ENCODE measurements at regions of chr5 and their contacts with region 1.

Region 1: DNA sequence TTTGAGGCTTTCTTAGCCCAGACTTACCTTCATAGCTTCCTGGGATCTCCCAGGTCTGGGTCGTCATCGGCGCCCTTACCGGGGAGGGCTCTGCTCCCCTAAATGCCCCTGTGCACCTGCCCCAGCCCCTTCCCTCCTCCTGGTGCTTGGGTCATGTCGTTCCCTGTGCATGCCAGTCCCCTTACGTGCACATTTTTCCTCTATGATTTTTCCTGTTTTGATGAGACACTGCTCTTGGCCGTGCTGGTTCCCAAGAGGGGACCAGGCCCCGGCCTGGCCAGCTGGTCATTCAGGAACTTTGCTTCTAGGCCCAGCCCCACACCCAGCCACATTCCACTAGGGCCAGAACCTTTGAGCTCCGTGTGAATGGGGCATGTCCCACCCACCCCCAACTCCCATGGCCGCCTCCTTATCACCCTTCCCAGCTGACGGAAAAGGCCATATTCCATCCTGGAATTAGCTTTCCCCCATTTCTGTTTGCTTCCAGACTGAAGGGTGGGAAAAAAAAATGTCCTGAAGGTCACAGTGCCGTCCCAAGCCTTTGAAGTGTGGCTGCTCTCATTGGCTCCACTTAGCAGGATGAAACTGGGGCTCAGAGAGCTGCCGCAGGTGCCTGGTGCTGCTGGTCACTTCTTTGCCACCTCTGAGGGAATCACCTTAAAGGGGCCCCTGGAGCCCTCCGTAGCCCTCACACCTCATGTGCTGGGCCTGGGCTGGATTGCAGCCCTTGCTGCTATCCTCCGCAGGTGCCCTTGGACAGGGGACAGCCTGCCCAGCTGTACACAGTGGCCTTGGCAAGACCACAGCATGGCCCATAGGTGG is 25.1 kb downstream of the ERGIC1 start:
- DNase-seq: no peak
- H3K4me3 ChIP-seq: peak overlapping the region in 2 of 4 donors; percentile 1 to 9
- H3K27ac ChIP-seq: peak overlapping the region; percentile 86 to 91 (median 90)
- H3K4me1 ChIP-seq: peaks cover 79 to 93% (median 92%) of the 10 kb centered on the region in 4 donors
- H3K27me3 ChIP-seq: no peaks in the 10 kb centered on the region
- CTCF ChIP-seq: no peak
- EP300 ChIP-seq: peak; percentile 6
- POLR2A ChIP-seq: no peak

Region 2: DNA sequence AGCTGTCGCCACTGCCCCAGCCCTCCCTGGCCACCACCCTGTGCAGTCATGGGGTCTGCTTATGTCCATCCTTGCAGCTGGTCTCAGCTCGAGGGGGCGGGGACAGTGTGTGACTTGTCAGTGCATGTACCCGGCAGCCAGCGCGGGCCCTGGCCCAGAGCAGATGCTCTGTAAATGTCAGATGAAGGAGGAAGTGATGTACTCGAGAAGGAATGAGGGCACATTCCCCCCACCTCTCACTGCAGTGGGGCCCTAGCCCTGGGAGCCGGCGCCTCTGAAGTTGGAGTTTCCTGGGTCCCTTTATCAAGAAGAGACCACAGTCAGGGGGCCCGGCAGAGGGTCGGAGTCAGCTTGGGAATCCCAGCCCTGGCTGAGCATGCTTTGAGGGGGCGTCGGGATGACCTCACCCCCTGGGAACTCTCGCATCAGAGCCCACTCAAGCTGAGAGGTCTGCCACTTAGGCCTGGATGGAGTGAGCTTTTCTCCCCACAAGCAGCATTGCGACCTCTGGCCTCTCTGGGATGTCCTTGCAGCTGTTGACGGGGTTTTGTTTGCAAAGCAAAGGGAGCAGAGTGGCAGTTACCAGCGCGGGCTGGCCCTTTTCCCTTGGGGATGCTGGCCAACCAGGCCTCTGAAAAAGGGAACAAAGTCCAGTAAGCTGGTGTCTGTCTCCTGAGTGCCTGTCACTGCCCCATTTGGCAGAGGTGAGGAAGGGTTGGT is 199.1 kb before region 1 on chr5:
- intact Hi-C with region 1: no loop called
- DNase-seq: peak; percentile 98
- H3K4me3 ChIP-seq: peak overlapping the region in 1 of 4 donors; percentile 8
- H3K27ac ChIP-seq: peak overlapping the region; percentile 86 to 95 (median 90)
- H3K4me1 ChIP-seq: peaks cover 77 to 96% (median 89%) of the 10 kb centered on the region in 4 donors
- H3K27me3 ChIP-seq: no peaks in the 10 kb centered on the region
- CTCF ChIP-seq: peak in 1 of 3 experiments; percentile 11
- EP300 ChIP-seq: no peak
- POLR2A ChIP-seq: no peak

Region 3: DNA sequence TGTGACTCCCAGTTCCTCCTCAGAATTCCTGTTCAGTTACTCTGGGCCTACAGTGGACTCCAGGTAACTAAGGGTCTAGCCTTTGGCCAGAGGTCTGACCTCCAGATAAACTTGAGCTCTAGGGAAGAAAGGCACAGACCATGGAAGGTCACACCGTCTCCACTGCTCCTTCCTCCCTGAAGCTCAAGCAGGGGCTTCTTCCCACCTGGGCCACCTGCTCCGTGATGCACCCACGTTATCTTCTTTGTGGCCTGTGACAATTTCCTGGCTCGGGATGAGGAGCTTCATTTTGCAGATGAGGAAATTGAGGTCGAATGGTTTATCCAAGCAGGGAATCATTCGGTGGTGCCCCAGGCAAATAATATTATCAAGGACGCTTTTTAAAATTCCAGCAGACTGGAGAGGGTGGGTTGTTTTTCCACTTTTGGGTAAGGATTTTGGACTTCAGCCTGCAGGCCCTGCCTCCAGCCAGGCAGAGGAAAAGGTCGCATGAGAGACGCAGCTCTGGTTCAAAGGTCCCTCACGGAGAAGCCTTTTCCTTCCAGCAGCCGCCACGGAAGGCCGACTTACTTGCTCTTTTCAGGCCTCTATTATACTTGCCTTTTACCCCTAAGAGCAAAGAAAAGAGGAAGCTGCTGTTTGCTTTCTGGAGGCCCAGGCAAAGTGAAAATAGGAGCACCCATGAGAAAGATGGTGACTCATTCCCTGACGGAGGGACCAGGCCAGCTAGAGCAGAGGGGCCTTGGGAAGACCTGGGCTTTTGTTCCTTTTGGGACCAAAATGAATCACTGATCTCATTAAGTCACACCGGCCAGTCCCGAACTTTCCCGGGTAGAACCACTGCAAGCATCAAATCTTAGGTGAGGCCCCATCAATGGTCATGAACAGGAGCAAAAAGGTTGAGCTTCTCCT is 65.4 kb before region 1 on chr5:
- intact Hi-C with region 1: loop called (anchors 5 kb)
- DNase-seq: no peak
- H3K4me3 ChIP-seq: no peak overlapping the region
- H3K27ac ChIP-seq: peak overlapping the region; percentile 76 to 85 (median 85)
- H3K4me1 ChIP-seq: peaks cover 39 to 67% (median 63%) of the 10 kb centered on the region in 4 donors
- H3K27me3 ChIP-seq: no peaks in the 10 kb centered on the region
- CTCF ChIP-seq: no peak
- EP300 ChIP-seq: no peak
- POLR2A ChIP-seq: no peak